ENCODE measurements at regions of chr4 and their contacts with region 1.

Region 1: GRCh38 chr4:153750197-153750817 is 9.5 kb downstream of the RNF175 start:
- DNase-seq: peak; percentile 74
- H3K4me3 Mint-ChIP-seq: no peak overlapping the region
- H3K27ac Mint-ChIP-seq: no peak overlapping the region
- H3K4me1 Mint-ChIP-seq: peaks cover 3% of the 10 kb centered on the region
- H3K27me3 Mint-ChIP-seq: no peaks in the 10 kb centered on the region

Region 2: DNA sequence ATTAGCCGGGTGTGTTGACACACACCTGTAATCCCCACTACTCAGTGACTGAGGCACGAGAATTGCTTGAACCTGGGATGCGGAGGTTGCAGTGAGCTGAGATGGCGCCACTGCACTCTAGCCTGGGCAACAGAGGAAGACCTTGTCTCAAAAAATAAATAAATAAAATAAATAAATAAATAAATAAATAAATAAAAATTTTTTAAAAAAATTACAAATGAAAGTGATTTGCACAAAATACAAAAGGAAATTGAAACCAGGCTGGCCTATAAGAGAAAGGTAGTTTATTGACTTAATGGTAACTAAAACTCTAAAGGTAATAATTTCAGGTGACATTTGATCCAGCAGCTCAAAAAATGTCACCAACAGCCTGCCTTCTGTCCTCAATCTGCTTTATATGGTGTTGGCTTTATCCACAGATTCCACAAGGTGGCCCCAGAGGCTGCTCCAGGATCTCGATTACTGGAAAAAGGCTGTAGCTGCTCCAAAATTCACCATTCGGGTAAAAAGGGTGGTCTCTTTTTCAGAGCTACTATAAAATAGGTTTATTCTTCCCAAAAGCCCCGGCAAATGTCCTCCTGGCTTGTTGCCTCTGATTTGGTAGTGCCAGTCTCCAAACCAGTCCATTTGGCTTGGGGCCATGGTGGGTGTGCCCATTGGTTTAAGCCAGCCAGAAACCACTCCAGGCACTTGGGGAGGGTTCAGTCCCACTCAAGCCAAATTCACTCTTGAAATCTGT is 607.4 kb before region 1 on chr4:
- CTCF ChIA-PET with region 1: interaction called, 4 read pairs
- POLR2A ChIA-PET with region 1: no interaction called
- intact Hi-C with region 1: loop called (anchors 5 kb)
- DNase-seq: peak; percentile 75
- H3K4me3 Mint-ChIP-seq: no peak overlapping the region
- H3K27ac Mint-ChIP-seq: no peak overlapping the region
- H3K4me1 Mint-ChIP-seq: peaks cover 10% of the 10 kb centered on the region
- H3K27me3 Mint-ChIP-seq: no peaks in the 10 kb centered on the region

Region 3: GRCh38 chr4:153634738-153635353 is 115.5 kb before region 1 on chr4:
- CTCF ChIA-PET with region 1: interaction called, 50 read pairs
- POLR2A ChIA-PET with region 1: no interaction called
- intact Hi-C with region 1: loop called (anchors 1 kb)
- DNase-seq: no peak
- H3K4me3 Mint-ChIP-seq: no peak overlapping the region
- H3K27ac Mint-ChIP-seq: no peak overlapping the region
- H3K4me1 Mint-ChIP-seq: no peaks in the 10 kb centered on the region
- H3K27me3 Mint-ChIP-seq: no peaks in the 10 kb centered on the region

Region 4: GRCh38 chr4:153649572-153649991 is 100.7 kb before region 1 on chr4:
- CTCF ChIA-PET with region 1: interaction called, 49 read pairs
- POLR2A ChIA-PET with region 1: no interaction called
- intact Hi-C with region 1: loop called (anchors 1 kb)
- DNase-seq: no peak
- H3K4me3 Mint-ChIP-seq: no peak overlapping the region
- H3K27ac Mint-ChIP-seq: no peak overlapping the region
- H3K4me1 Mint-ChIP-seq: peaks cover 36% of the 10 kb centered on the region
- H3K27me3 Mint-ChIP-seq: no peaks in the 10 kb centered on the region

Region 5: GRCh38 chr4:153705743-153706468 is 44.4 kb before region 1 on chr4:
- CTCF ChIA-PET with region 1: interaction called, 13 read pairs
- POLR2A ChIA-PET with region 1: no interaction called
- intact Hi-C with region 1: no loop called
- DNase-seq: no peak
- H3K4me3 Mint-ChIP-seq: no peak overlapping the region
- H3K27ac Mint-ChIP-seq: no peak overlapping the region
- H3K4me1 Mint-ChIP-seq: peaks cover 8% of the 10 kb centered on the region
- H3K27me3 Mint-ChIP-seq: peaks cover 4% of the 10 kb centered on the region

Measured in activated CD4-positive, alpha-beta memory T cell treated with anti-CD3 and anti-CD28 coated beads for 36 hours (primary cell).